Ascending aorta (tissue), 2 donors: ENCODE measurements at regions of chr7 and their contacts with region 1.

Region 1: GRCh38 chr7:151626422-151627115 is 106.9 kb upstream of the RHEB start:
- DNase-seq: peak in 1 of 2 donors; percentile 63
- H3K4me3 ChIP-seq: no peak overlapping the region
- H3K27ac ChIP-seq: no peak overlapping the region
- H3K4me1 ChIP-seq: peaks cover 12 to 40% of the 10 kb centered on the region in 2 donors
- H3K27me3 ChIP-seq: no peaks in the 10 kb centered on the region
- CTCF ChIP-seq: peak; percentile 14 to 60 (median 50)

Region 2: DNA sequence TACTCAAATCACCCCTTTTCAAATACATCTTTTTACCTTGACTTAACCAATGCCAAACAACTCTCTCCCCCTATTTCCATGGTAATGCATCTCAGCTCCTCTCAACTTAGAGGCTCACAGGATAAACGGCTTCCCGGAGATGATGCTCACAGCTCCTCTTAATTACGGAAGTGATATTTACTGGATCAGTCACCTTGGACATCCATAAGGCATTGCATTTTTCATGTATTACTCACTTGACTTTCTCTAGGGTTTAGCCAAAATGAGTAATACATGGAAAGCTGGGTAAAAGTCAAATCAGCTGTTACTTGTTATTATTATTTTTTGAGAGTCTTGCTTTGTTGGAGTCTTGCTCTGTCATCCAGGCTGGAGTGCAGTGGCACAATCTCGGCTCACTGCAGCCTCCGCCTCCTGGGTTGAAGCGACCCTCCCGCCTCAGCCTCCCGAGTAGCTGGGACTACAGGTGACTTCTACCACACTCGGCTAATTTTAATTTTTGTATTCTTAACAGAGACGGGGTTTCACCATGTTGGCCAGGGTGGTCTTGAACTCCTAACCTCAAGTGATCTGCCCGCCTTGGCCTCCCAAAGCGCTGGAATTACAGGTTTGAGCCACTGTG is 33.6 kb before region 1 on chr7:
- intact Hi-C with region 1: loop called (anchors 5 kb)
- DNase-seq: no peak
- H3K4me3 ChIP-seq: no peak overlapping the region
- H3K27ac ChIP-seq: peak overlapping the region in 1 of 2 donors; percentile 29
- H3K4me1 ChIP-seq: peaks cover 0 to 12% of the 10 kb centered on the region in 2 donors
- H3K27me3 ChIP-seq: no peaks in the 10 kb centered on the region
- CTCF ChIP-seq: no peak